ENCODE measurements at regions of chr18 and their contacts with region 1.

Region 1: GRCh38 chr18:50878345-50879301 is at the start of gene ME2:
- DNase-seq: peak; percentile 98
- H3K4me3 Mint-ChIP-seq: peak within 1 kb of the TSS; percentile 95
- H3K27ac Mint-ChIP-seq: peak within 1 kb of the TSS; percentile 99
- H3K4me1 Mint-ChIP-seq: peaks cover 24% of the 10 kb centered on the region
- H3K27me3 Mint-ChIP-seq: peaks cover 4% of the 10 kb centered on the region
- total RNA-seq, gene ME2: 141 and 143 TPM in 2 replicates

Region 2: DNA sequence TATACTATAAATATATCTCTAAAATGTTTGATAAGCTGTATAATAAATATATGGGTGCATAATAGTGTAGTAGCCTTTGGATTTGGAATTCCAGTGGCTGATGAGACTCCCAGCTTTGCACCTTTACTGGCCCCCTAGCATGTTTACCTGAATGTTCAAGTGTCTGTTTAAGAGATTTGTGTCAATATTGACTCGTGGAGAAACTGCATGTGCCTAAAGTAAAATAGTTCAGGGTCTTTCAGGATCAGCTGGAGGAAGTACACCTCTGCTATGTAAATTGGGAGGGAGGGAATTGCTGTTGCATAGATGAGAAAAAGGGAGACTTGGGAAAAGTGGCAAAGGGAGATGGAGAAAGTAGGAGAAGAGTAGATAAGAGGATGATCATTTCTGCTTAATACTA is 24.2 kb after region 1 on chr18:
- intact Hi-C with region 1: loop called (anchors 1 kb)
- DNase-seq: no peak
- H3K4me3 Mint-ChIP-seq: no peak overlapping the region
- H3K27ac Mint-ChIP-seq: no peak overlapping the region
- H3K4me1 Mint-ChIP-seq: peaks cover 12% of the 10 kb centered on the region
- H3K27me3 Mint-ChIP-seq: no peaks in the 10 kb centered on the region

Region 3: DNA sequence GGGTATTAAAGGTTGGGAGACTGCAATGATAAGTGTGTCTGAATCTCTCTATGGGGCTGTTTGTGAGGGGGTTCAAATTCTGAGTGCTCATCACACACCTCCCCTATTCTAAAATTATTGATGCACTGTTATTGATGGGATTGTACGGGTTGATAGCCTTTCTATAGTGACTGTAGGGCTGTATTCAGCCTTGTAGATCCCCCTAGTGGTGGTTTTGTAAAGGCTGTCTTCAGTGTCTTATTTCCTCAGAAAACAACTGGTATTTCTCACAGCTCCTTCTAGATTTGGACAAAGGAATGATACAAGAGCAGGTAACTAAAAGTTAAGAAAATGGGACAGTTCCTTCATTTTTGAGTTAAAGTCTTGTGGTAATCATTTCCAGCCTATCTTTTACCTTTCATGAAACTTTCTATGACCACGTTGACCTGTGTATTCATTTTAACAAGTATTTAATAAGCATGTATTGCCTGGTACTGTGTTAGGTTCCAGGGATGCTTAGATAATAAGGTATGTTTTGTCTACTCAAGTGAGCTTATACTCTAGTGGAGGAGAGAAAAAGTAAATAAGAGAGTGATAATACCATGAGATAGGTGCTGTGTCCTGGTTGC is 172.6 kb after region 1 on chr18:
- intact Hi-C with region 1: loop called (anchors 2 kb)
- DNase-seq: peak; percentile 76
- H3K4me3 Mint-ChIP-seq: no peak overlapping the region
- H3K27ac Mint-ChIP-seq: peak overlapping the region; percentile 34
- H3K4me1 Mint-ChIP-seq: peaks cover 29% of the 10 kb centered on the region
- H3K27me3 Mint-ChIP-seq: no peaks in the 10 kb centered on the region

Measured in activated CD4-positive, alpha-beta T cell treated with anti-CD3 and anti-CD28 coated beads, Interleukin-2, amount 10 ng/mL, durations not matched to agents 24 days and 14 days (primary cell).